ENCODE measurements at regions of chr6 and their contacts with region 1.

Region 1: GRCh38 chr6:42984001-42984923 is at the start of gene PPP2R5D:
- DNase-seq: peak; percentile 95

Region 2: GRCh38 chr6:42963855-42964605 is 20.2 kb before region 1 on chr6:
- CTCF ChIA-PET with region 1: no interaction called
- POLR2A ChIA-PET with region 1: interaction called, 22 read pairs
- DNase-seq: peak; percentile 76

Region 3: GRCh38 chr6:42996513-42996912 is 12.3 kb after region 1 on chr6:
- CTCF ChIA-PET with region 1: no interaction called
- POLR2A ChIA-PET with region 1: interaction called, 13 read pairs
- DNase-seq: no peak

Region 4: DNA sequence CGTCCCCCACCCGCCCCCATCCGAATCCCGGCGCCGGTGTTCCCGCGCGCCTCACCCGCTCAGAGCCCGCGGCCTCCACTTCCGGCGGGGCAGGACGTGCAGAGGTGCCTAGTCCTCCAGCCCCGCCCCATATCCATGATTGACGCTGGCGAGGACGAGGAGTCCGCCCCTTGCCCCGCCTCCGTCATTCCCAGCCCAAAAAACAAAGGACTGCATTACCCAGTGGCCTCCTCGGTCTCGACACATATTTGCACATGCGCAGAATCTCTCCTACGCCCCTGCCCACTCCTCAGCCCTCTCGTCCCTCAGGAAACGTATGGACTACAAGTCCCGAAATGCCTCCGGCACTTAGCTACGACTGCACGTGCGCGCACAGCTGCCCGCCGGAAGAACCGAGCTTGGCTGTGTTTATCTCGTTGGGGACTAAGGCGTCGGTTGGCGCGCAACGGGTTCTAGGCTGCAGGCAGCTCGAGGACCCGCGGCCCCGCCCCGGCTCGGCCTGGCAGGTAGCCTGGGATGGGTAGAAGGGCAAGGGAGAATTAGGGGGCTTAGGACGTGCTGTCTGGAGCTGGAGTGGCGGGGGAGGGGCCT is 29.7 kb after region 1 on chr6 and contains the starts of genes KLHDC3 and MEA1:
- CTCF ChIA-PET with region 1: interaction called, 3 read pairs
- POLR2A ChIA-PET with region 1: interaction called, 78 read pairs
- DNase-seq: peak; percentile 99

Region 5: GRCh38 chr6:43053545-43054205 is 69.4 kb after region 1 on chr6 and contains the start of gene CUL7:
- CTCF ChIA-PET with region 1: no interaction called
- POLR2A ChIA-PET with region 1: interaction called, 19 read pairs
- DNase-seq: peak; percentile 95

Measured in HEK293T (cell line).